ENCODE measurements at regions of chr10 and their contacts with region 1.

Region 1: GRCh38 chr10:123132576-123133477 is 2.9 kb upstream of the HMX3 start:
- DNase-seq: no peak
- H3K4me3 ChIP-seq: peak overlapping the region; percentile 38
- CTCF ChIP-seq: peak; percentile 89

Region 2: DNA sequence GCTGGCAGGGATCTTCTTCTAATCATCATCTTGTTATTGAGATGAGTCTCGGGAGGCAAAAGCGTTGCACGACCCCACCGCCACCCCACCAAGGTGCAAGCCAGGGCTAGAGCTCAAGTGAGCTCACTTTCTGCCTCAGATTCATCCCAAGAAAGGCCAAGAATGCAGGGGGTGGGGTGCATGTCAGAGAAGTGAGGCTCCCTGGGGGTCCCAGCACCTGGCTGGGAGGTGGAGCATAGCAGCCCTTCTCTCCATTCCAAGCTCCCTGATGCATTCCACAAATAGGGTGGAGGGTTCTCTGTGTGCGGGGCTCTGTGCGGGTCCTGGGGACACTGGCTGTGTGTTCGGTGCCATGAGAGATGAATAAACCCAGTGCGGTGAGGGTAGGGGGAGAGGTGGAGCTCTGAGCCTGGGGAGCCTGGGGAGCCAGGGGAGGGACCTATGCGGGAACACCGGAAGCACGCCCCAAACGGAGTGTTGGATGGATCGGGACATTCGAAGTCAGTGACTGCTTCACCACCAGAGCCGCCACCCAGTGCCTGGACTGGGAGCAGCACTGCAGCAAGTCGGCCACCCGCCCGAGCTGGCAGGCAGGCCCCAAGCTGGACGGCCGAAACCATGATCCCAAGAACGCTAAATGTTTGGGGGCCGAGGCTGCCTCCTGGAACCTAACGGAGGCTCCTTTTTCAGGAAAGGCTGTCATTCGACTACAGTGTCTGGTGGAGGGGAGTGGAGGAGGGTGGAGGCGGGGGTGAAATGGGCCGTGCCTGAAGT is 15.0 kb before region 1 on chr10:
- CTCF ChIA-PET with region 1: interaction called, 22 read pairs
- POLR2A ChIA-PET with region 1: no interaction called
- DNase-seq: no peak
- H3K4me3 ChIP-seq: no peak overlapping the region
- CTCF ChIP-seq: no peak

Region 3: DNA sequence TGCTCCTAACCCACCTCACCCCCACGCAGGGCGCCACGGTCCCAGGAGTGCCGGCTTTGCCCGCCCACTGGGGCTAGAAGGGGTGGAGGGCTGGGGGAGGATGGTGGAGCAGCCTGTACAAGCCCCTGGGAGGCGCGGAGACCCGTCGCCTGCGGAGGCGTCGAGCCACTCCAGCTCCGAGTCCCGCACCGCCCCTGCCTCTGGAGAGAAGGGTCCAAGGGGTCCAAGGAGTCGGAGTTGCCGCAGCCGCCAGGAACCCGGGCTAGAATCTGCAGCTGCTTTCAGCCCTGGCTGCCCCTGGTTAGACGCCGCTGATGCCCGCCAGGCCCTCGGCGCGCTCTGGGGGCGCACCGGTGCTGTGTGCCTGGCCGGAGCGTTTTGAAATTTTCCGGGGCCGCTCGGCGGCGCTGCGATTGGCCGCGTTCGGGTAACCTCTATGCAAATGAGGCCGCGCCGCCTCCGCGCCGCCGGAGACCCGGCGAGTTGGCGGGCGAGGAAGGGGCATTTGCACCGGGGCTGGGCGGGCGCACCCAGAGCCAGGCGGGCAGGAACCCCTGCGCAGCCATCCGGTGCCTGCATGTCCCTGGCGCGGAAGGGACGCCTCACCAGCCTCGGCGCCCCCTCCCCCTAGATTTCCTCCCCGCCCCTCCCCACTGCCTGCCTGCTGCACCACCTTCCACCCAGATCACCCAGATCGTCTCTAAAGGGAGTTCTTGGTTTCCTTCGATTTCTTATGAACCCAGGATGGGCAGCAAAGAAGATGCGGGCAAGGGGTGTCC is 15.0 kb after region 1 on chr10 and contains the start of gene HMX2:
- CTCF ChIA-PET with region 1: interaction called, 31 read pairs
- POLR2A ChIA-PET with region 1: no interaction called
- DNase-seq: no peak
- H3K4me3 ChIP-seq: no peak within 1 kb of the TSS
- CTCF ChIP-seq: no peak

Region 4: DNA sequence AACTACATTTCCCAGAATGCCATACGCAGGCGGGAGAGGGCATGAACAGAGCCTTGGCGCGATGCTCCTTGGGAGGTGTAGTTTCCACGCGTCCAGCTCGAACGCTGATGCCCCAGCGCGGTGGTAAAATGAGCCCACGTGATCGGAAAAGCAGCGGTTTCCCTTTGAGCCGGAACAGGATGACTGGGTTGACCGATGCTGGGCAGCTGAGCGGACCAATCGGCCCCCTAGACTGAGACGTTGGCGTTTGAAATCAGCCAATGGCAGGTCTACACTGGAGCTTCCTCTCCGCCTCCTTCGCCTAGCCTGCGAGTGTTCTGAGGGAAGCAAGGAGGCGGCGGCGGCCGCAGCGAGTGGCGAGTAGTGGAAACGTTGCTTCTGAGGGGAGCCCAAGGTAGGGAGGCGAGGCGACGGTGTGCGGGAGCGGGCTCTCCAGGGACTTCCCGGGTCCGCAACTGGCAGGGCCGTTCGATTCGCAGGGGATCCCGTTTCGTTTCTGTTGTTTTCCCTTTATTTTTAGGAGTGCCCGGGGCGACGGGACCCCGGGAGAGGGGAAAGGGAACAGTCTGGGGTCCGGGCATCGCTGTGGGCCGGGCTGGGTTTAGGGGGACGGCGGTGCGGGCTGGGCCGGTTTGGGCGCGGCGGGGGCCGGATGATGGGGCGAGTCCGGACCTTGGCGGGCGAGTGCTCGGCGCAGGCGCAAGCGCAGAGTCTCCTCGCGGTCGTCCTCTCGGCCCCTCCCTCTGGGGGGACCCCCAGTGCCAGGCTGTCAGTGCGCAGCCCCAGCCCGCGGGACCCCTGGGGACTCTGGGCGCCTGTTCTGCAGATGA is 21.5 kb after region 1 on chr10 and contains the start of gene BUB3:
- CTCF ChIA-PET with region 1: interaction called, 27 read pairs
- POLR2A ChIA-PET with region 1: no interaction called
- DNase-seq: peak; percentile 96
- H3K4me3 ChIP-seq: peak within 1 kb of the TSS; percentile 97
- CTCF ChIP-seq: peak; percentile 2

Region 5: DNA sequence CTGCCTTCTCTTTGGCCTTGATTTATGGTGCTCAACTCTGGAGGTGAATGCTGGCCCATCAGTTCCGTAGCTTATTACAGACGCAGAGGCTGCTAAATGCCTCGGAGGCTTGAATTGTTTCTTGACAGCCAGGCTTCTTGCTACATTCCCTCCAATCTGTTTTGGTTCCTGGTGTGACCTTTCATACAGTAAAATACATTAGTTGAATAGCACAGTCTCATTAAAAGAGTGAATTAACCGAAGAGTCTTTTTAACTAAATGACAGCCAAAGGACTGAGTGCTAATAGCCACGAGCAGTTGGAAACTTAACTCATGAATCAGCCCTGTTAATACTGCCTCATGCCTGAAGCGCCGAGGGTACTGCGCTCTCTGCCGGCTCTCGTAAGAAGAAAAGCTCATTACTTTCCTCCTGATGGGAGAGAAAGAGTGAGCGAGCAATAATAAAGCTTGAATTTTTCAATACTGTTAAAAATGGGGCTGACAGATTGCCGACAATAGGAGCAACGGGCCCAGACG is 296.9 kb after region 1 on chr10:
- CTCF ChIA-PET with region 1: interaction called, 14 read pairs
- POLR2A ChIA-PET with region 1: no interaction called
- DNase-seq: no peak
- H3K4me3 ChIP-seq: no peak overlapping the region
- CTCF ChIP-seq: no peak

Region 6: DNA sequence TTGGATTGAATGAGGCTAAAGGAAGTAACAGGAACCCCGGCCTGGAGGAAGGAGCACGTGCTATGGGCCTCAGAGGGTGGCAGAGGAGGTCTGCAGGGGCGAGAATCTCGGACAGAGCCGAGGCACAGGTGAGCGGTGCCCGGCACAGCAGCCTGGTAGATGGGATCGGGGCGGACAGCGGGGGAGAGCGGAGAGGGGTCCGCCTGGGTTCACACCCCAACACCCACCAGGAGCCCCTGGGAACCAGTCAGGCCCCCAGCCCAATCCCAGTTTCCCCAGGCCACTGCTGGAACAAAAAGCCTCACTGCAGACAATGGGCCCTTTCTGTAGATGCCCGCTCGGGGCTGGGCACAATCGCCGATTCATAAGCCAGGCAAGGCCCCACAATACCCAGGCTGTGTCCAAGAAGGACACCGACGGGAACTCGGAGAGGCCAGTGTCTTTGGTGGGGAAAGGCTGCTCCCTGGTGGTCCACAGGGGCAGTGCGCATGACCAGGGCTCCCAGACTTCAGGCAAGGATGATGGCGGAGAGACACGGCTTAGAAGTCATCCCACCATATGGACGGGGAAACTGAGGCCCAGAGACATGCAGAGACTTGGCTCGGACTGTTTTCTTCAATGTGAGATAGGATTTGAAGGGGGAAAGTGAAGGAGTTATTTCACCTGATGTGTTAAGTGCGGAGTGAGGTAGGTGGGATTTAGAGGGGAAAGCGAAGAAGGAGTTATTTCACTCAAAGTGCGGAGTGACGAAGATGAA is 426.4 kb after region 1 on chr10:
- CTCF ChIA-PET with region 1: interaction called, 29 read pairs
- POLR2A ChIA-PET with region 1: no interaction called
- DNase-seq: no peak
- H3K4me3 ChIP-seq: no peak overlapping the region
- CTCF ChIP-seq: peak; percentile 97